K562 (cell line): ENCODE measurements at regions of chr1 and their contacts with region 1.

Region 1: GRCh38 chr1:156860113-156860627 is 495 bp upstream of the NTRK1 start:
- DNase-seq: peak; percentile 80 to 86 (median 80)
- ATAC-seq: peak; percentile 78
- H3K4me3 ChIP-seq: peak overlapping the region; percentile 34
- H3K27ac ChIP-seq: no peak overlapping the region; the same call in 2 of the 3 replicates
- H3K4me1 ChIP-seq: peaks cover 75 to 81% of the 10 kb centered on the region in 2 experiments
- H3K27me3 ChIP-seq: no peaks in the 10 kb centered on the region
- CTCF ChIP-seq: peak; percentile 83 to 90 (median 85)
- EP300 ChIP-seq: no peak
- POLR2A ChIP-seq: no peak
- RAD21 ChIP-seq: peak; percentile 89 to 94

Region 2: GRCh38 chr1:156689035-156689952 is 170.9 kb before region 1 on chr1:
- CTCF ChIA-PET with region 1: interaction called, 8 read pairs
- POLR2A ChIA-PET with region 1: interaction called, 6 read pairs
- in situ Hi-C with region 1: no loop called
- intact Hi-C with region 1: loop called (anchors 5 kb)
- DNase-seq: peak; percentile 87 to 90 (median 88)
- ATAC-seq: peak; percentile 81
- H3K4me3 ChIP-seq: peak overlapping the region; percentile 32
- H3K27ac ChIP-seq: peak overlapping the region; percentile 21; the same call in 2 of the 3 replicates
- H3K4me1 ChIP-seq: peaks cover 45 to 54% of the 10 kb centered on the region in 2 experiments
- H3K27me3 ChIP-seq: 0 out of 5 replicates have a peak, but pooled peaks cover 0 to 2% of the 10 kb centered on the region in 2 experiments
- CTCF ChIP-seq: peak; percentile 92 to 97 (median 97)
- EP300 ChIP-seq: 0 out of 2 replicates have a peak, but pooled peaks have one; percentile 12
- POLR2A ChIP-seq: no peak
- RAD21 ChIP-seq: peak; percentile 94 to 98

Region 3: DNA sequence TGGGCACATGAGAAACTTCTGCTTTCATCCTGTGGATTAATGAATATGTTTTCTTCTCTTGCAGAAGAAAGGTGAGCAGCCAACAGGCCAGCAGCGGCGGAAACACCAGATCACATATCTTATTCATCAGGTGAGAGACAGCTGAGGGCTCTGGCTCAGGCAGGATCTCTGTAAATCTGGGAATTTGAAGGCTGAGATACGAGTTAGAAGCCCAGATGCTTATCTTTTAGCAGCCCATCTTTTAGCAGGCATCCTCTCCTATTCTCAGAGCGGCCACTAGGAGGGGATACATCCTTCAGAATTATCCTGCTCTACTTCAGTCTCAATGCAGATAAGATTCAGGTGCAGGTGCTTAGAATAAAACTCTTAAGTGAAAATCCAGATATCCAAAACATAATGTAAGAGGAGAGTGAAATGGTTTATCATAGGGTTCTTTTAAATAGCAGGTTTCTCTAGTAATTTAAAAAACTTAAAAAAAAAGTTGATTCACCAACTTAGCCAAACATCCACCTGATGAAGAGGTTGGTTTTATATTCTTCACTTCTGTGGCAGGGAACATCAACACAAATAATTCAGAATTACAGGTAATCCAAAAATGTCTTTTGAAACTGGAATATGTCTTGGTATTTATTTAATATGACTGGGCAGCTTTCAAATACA is 62.8 kb before region 1 on chr1:
- CTCF ChIA-PET with region 1: interaction called, 18 read pairs
- POLR2A ChIA-PET with region 1: interaction called, 3 read pairs
- in situ Hi-C with region 1: loop called (anchors 5 kb)
- intact Hi-C with region 1: loop called (anchors 1 kb)
- DNase-seq: peak; percentile 70 to 77 (median 74)
- ATAC-seq: peak; percentile 85
- H3K4me3 ChIP-seq: no peak overlapping the region
- H3K27ac ChIP-seq: no peak overlapping the region
- H3K4me1 ChIP-seq: no peaks in the 10 kb centered on the region
- H3K27me3 ChIP-seq: no peaks in the 10 kb centered on the region
- CTCF ChIP-seq: peak; percentile 70 to 91 (median 85)
- EP300 ChIP-seq: peak; percentile 29
- POLR2A ChIP-seq: no peak
- RAD21 ChIP-seq: peak; percentile 86 to 89

Region 4: DNA sequence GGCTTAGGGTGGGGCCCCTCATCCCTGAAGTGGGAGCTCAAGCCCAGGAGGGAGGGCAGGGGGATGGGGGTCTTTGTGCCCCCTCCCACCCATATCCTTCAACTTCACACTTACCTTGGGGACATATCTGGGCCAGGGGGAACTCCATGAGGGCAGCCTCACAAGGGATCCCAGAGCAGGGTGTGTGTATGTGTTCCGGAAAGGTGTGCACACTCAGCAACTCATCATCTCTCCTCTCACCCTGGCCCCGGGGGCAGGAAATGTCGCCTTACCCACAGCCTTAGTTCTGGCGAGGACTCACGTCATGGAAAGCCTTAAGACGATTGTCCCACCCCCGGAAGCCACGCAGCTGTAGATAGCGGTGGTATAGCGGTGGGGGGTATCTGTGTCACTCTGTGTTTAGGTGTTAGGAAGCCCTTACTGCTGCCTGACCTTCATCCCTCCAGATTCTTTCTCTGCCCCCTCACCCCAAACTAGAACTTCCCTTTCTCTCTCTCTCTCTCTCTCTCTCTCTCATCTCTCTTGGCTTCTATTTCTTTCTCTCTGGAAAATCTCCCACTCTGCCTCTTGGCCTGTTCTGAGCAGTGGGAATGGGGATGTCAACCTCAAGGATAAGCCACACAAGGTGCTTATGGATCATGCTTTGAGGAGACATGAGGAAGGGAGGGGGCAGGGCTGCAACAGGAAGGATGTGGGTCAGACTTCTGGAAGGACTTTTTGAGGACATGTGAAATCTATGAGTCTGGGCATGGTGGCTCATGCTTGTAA is 43.4 kb before region 1 on chr1 and contains the start of gene SH2D2A:
- CTCF ChIA-PET with region 1: interaction called, 3 read pairs
- POLR2A ChIA-PET with region 1: interaction called, 3 read pairs
- in situ Hi-C with region 1: no loop called
- intact Hi-C with region 1: loop called (anchors 2 kb)
- DNase-seq: peak; percentile 78 to 92 (median 84)
- ATAC-seq: peak; percentile 76
- H3K4me3 ChIP-seq: peak within 1 kb of the TSS; percentile 36
- H3K27ac ChIP-seq: peak within 1 kb of the TSS; percentile 77
- H3K4me1 ChIP-seq: peaks cover 50 to 56% of the 10 kb centered on the region in 2 experiments
- H3K27me3 ChIP-seq: peaks cover 0 to under 1% of the 10 kb centered on the region in 2 experiments; a peak in 1 of 5 replicates
- CTCF ChIP-seq: no peak
- EP300 ChIP-seq: peak; percentile 35; the same call in 1 of the 2 replicates
- POLR2A ChIP-seq: peak; percentile 64
- RAD21 ChIP-seq: no peak
- polyA plus RNA-seq, gene SH2D2A: 0.89 to 1.1 TPM

Region 5: DNA sequence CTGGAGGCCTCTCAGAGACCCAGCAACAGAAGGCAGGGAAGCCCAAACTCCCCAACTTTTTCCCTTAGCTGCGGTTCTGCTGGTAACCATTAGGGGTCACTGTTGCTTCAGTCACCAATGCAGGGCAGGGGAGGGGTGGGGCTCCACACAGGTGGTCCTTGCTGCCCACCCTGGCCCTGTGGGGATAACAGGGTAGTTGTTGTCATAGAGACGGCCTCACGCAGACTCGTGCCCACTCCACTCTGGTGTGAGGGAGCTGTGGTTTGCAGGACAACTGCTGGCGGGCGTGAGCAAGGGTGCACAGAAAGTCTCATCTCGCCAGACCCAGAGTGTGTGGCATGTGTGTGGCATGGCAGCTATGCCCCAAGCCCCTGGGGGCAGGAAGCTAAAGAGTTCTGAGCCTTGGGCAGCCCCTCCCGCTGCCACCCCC is 21.2 kb before region 1 on chr1:
- CTCF ChIA-PET with region 1: interaction called, 24 read pairs
- POLR2A ChIA-PET with region 1: interaction called, 4 read pairs
- in situ Hi-C with region 1: no loop called
- intact Hi-C with region 1: loop called (anchors 1 kb)
- DNase-seq: peak; percentile 61 to 77 (median 75)
- ATAC-seq: peak; percentile 87
- H3K4me3 ChIP-seq: no peak overlapping the region
- H3K27ac ChIP-seq: no peak overlapping the region
- H3K4me1 ChIP-seq: peaks cover 6 to 8% of the 10 kb centered on the region in 2 experiments; a peak in 4 of 5 replicates
- H3K27me3 ChIP-seq: peaks cover 5 to 7% of the 10 kb centered on the region in 2 experiments; a peak in 4 of 5 replicates
- CTCF ChIP-seq: peak; percentile 90 to 95 (median 94)
- EP300 ChIP-seq: no peak
- POLR2A ChIP-seq: no peak
- RAD21 ChIP-seq: peak; percentile 88 to 94

Region 6: DNA sequence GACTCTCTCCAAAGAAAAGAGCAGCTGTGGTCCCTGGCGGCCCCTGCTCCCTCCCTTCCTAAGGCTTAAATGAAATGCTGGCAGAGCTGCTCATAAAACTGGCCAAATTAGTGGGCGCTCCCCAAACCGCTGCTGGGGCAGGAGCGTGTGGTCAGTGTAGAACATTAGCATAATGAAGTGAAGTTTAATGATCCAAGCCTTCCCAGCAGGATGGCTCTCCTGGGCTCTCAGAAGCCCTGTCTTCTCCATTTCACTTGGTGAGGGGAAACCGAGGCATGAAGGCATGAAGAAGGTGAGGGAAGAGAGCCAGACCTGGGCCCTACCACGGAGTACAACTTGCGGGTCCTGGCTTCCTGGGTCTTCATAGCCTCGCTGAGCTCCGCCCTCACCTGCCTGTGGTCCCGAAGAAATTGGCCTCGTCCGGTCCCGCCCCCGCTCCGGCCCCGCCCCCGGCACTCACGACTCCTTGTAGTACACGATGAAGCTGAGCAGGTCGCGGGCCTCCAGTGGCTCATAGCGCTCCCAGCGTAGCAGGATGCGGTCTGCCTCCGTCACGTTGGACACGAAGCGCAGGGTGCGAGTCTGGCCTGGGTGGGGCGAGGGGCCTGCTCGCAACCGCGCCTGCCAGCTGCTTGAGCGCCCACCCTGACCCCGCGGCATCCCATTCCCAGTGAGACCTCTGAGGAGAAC is 11.6 kb before region 1 on chr1:
- CTCF ChIA-PET with region 1: no interaction called
- POLR2A ChIA-PET with region 1: interaction called, 10 read pairs
- in situ Hi-C with region 1: no loop called
- intact Hi-C with region 1: no loop called
- DNase-seq: peak; percentile 72 to 86 (median 78)
- ATAC-seq: peak; percentile 85
- H3K4me3 ChIP-seq: no peak overlapping the region
- H3K27ac ChIP-seq: no peak overlapping the region
- H3K4me1 ChIP-seq: peaks cover 13 to 34% of the 10 kb centered on the region in 2 experiments; a peak in 4 of 5 replicates
- H3K27me3 ChIP-seq: 0 out of 5 replicates have a peak, but pooled peaks cover 0 to 13% of the 10 kb centered on the region in 2 experiments
- CTCF ChIP-seq: no peak
- EP300 ChIP-seq: no peak
- POLR2A ChIP-seq: no peak
- RAD21 ChIP-seq: no peak

Region 7: GRCh38 chr1:157092806-157093205 is 232.6 kb after region 1 on chr1:
- CTCF ChIA-PET with region 1: no interaction called
- POLR2A ChIA-PET with region 1: no interaction called
- in situ Hi-C with region 1: no loop called
- intact Hi-C with region 1: no loop called
- DNase-seq: peak in 1 of 4 experiments; percentile 9
- ATAC-seq: peak; percentile 28; the same call in 2 of the 3 replicates
- H3K4me3 ChIP-seq: no peak overlapping the region
- H3K27ac ChIP-seq: no peak overlapping the region
- H3K4me1 ChIP-seq: peaks cover 2 to 4% of the 10 kb centered on the region in 2 experiments; a peak in 1 of 5 replicates
- H3K27me3 ChIP-seq: peaks cover 3% of the 10 kb centered on the region in 2 experiments; a peak in 3 of 5 replicates
- CTCF ChIP-seq: no peak
- EP300 ChIP-seq: no peak
- POLR2A ChIP-seq: no peak
- RAD21 ChIP-seq: no peak